CD4-positive, alpha-beta T cell (primary cell): ENCODE measurements at regions of chr16 and their contacts with region 1.

Region 1: DNA sequence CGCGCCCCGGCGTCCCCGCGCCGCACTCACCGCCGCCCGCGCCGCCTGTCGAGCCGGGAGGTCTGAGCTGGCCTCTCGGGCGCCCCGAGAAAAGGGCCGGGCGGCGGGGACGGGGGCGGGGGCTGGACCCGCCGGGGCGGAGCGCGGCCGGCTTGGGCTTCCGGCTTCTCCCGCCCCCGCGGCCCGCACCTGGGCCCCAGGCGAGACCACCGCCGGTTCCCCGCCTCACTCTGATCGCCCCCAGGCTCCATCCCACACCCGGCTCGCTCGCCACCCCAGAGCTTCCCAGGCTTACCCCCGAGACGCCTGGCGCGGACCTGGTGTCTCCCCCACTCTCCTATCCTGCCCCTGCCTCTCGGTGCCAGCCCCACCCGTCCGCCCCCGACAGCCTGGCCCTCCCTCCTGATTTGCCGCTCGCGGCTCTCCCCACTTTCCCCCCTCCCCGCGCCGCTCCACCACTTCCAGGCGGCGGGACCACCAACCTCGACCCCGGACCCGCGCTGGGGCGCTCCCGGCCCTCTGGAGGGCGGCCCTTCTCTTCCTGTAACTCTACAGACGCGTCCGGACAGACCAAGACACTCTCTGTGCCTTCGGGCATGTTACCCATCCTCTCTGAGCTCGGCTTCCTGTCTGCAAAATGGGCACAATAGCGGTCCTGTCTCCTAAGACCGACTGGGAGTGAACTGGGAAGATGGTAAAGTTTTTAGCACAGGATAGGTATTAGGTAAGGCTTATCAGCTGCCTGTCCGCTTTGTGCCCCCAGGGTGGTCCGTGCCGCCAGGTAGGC is at the start of gene LITAF:
- DNase-seq: peak; percentile 22 to 73 (median 52)
- ATAC-seq: peak; percentile 45
- H3K4me3 ChIP-seq: peak within 1 kb of the TSS; percentile 96
- H3K4me3 Mint-ChIP-seq: peak within 1 kb of the TSS; percentile 95
- H3K27ac ChIP-seq: peak within 1 kb of the TSS; percentile 80 to 82
- H3K27ac Mint-ChIP-seq: peak within 1 kb of the TSS; percentile 97
- H3K4me1 ChIP-seq: peaks cover 48% of the 10 kb centered on the region
- H3K4me1 Mint-ChIP-seq: peaks cover 53% of the 10 kb centered on the region
- H3K27me3 ChIP-seq: no peaks in the 10 kb centered on the region
- H3K27me3 Mint-ChIP-seq: no peaks in the 10 kb centered on the region
- CTCF ChIP-seq: no peak
- total RNA-seq, gene LITAF: 226 to 257 TPM

Region 2: GRCh38 chr16:11546608-11547061 is 40.4 kb before region 1 on chr16:
- CTCF ChIA-PET with region 1: no interaction called
- POLR2A ChIA-PET with region 1: no interaction called
- intact Hi-C with region 1: loop called in 1 of 2 experiments (anchors 5 kb)
- DNase-seq: no peak
- ATAC-seq: no peak
- H3K4me3 ChIP-seq: no peak overlapping the region
- H3K4me3 Mint-ChIP-seq: no peak overlapping the region
- H3K27ac ChIP-seq: no peak overlapping the region
- H3K27ac Mint-ChIP-seq: peak overlapping the region; percentile 78
- H3K4me1 ChIP-seq: no peaks in the 10 kb centered on the region
- H3K4me1 Mint-ChIP-seq: no peaks in the 10 kb centered on the region
- H3K27me3 ChIP-seq: no peaks in the 10 kb centered on the region
- H3K27me3 Mint-ChIP-seq: no peaks in the 10 kb centered on the region
- CTCF ChIP-seq: no peak

Region 3: GRCh38 chr16:11560701-11561449 is 26.2 kb before region 1 on chr16:
- CTCF ChIA-PET with region 1: interaction called, 5 read pairs
- POLR2A ChIA-PET with region 1: interaction called, 26 read pairs
- intact Hi-C with region 1: loop called (anchors 1 to 2 kb)
- DNase-seq: peak; percentile 58 to 93 (median 67)
- ATAC-seq: peak; percentile 86
- H3K4me3 ChIP-seq: peak overlapping the region; percentile 53
- H3K4me3 Mint-ChIP-seq: peak overlapping the region; percentile 49
- H3K27ac ChIP-seq: peak overlapping the region; percentile 86 to 87
- H3K27ac Mint-ChIP-seq: peak overlapping the region; percentile 94
- H3K4me1 ChIP-seq: peaks cover 90% of the 10 kb centered on the region
- H3K4me1 Mint-ChIP-seq: peaks cover 83% of the 10 kb centered on the region
- H3K27me3 ChIP-seq: no peaks in the 10 kb centered on the region
- H3K27me3 Mint-ChIP-seq: no peaks in the 10 kb centered on the region
- CTCF ChIP-seq: no peak

Region 4: DNA sequence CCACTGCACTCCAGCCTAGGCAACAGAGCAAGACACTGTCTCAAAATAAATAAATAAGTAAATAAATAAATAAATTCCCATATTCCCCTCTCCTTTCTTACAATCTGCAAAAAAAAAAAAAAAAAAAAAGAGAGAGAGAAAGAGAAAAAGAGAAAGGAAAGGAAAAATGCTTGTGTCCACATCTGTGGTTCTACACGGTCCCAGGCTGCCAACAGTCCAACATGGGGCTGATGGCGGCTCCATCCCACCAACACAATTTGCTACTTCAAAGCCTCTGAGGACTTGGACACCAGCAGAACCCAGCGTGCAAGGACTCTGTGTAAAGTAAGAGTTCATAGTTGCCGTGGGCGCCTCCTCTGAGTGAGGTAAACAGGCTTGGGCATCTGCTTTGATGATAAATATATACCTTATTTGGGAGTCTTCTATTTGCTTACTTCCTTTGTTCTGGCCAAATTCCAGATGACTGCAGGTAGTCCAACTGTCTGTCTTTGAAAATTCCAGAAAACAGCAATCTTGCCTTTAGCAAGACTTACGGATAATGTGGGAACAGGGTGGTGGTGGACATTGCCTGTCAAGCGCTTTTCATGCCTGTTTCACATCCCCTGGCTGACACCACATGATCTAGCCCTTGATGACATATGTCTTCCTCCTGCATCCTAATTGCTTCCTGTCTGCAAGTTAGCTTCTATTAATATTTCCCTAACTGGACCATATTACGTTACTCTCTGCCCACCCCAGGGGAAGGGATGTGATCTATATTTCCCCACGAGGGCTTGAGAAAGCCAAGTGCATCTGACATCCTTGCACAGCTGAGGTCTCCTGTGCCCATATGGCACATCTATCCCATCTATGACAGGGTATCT is 10.4 kb before region 1 on chr16:
- CTCF ChIA-PET with region 1: interaction called, 4 read pairs
- POLR2A ChIA-PET with region 1: interaction called, 10 read pairs
- intact Hi-C with region 1: no loop called
- DNase-seq: peak in 3 of 14 experiments; percentile 48 to 58 (median 54)
- ATAC-seq: no peak
- H3K4me3 ChIP-seq: no peak overlapping the region
- H3K4me3 Mint-ChIP-seq: peak overlapping the region; percentile 62
- H3K27ac ChIP-seq: no peak overlapping the region
- H3K27ac Mint-ChIP-seq: peak overlapping the region; percentile 88
- H3K4me1 ChIP-seq: peaks cover 87% of the 10 kb centered on the region
- H3K4me1 Mint-ChIP-seq: peaks cover 85% of the 10 kb centered on the region
- H3K27me3 ChIP-seq: no peaks in the 10 kb centered on the region
- H3K27me3 Mint-ChIP-seq: no peaks in the 10 kb centered on the region
- CTCF ChIP-seq: no peak

Region 5: GRCh38 chr16:11706180-11706742 is 119.2 kb after region 1 on chr16:
- CTCF ChIA-PET with region 1: no interaction called
- POLR2A ChIA-PET with region 1: no interaction called
- intact Hi-C with region 1: no loop called
- DNase-seq: no peak
- ATAC-seq: no peak
- H3K4me3 ChIP-seq: no peak overlapping the region
- H3K4me3 Mint-ChIP-seq: no peak overlapping the region
- H3K27ac ChIP-seq: no peak overlapping the region
- H3K27ac Mint-ChIP-seq: no peak overlapping the region
- H3K4me1 ChIP-seq: no peaks in the 10 kb centered on the region
- H3K4me1 Mint-ChIP-seq: peaks cover 30% of the 10 kb centered on the region
- H3K27me3 ChIP-seq: no peaks in the 10 kb centered on the region
- H3K27me3 Mint-ChIP-seq: no peaks in the 10 kb centered on the region
- CTCF ChIP-seq: no peak